GM12878 (cell line): ENCODE measurements at regions of chr15 and their contacts with region 1.

Region 1: GRCh38 chr15:88467073-88467934 is at the starts of genes MRPL46 and MRPS11:
- DNase-seq: peak; percentile 80
- ATAC-seq: peak; percentile 87
- H3K4me3 ChIP-seq: peak within 1 kb of the TSS; percentile 95
- H3K27ac ChIP-seq: peak within 1 kb of the TSS; percentile 97
- H3K4me1 ChIP-seq: peaks cover 6% of the 10 kb centered on the region
- H3K27me3 ChIP-seq: no peaks in the 10 kb centered on the region
- CTCF ChIP-seq: no peak
- EP300 ChIP-seq: no peak
- POLR2A ChIP-seq: peak; percentile 90
- RAD21 ChIP-seq: no peak
- polyA plus RNA-seq, gene MRPL46: 55.3 to 66.9 TPM
- polyA plus RNA-seq, gene MRPS11: 37.1 to 44.3 TPM

Region 2: GRCh38 chr15:88428805-88429605 is 38.3 kb before region 1 on chr15:
- CTCF ChIA-PET with region 1: no interaction called
- POLR2A ChIA-PET with region 1: no interaction called
- RAD21 ChIA-PET with region 1: no interaction called
- SMC1A ChIA-PET with region 1: no interaction called
- in situ Hi-C with region 1: no loop called
- intact Hi-C with region 1: no loop called
- DNase-seq: no peak
- ATAC-seq: no peak
- H3K4me3 ChIP-seq: no peak overlapping the region
- H3K27ac ChIP-seq: no peak overlapping the region
- H3K4me1 ChIP-seq: no peaks in the 10 kb centered on the region
- H3K27me3 ChIP-seq: peaks cover 2 to 8% of the 10 kb centered on the region in 2 experiments; a peak in 2 of 4 replicates
- CTCF ChIP-seq: no peak
- EP300 ChIP-seq: no peak
- POLR2A ChIP-seq: no peak
- RAD21 ChIP-seq: no peak

Region 3: DNA sequence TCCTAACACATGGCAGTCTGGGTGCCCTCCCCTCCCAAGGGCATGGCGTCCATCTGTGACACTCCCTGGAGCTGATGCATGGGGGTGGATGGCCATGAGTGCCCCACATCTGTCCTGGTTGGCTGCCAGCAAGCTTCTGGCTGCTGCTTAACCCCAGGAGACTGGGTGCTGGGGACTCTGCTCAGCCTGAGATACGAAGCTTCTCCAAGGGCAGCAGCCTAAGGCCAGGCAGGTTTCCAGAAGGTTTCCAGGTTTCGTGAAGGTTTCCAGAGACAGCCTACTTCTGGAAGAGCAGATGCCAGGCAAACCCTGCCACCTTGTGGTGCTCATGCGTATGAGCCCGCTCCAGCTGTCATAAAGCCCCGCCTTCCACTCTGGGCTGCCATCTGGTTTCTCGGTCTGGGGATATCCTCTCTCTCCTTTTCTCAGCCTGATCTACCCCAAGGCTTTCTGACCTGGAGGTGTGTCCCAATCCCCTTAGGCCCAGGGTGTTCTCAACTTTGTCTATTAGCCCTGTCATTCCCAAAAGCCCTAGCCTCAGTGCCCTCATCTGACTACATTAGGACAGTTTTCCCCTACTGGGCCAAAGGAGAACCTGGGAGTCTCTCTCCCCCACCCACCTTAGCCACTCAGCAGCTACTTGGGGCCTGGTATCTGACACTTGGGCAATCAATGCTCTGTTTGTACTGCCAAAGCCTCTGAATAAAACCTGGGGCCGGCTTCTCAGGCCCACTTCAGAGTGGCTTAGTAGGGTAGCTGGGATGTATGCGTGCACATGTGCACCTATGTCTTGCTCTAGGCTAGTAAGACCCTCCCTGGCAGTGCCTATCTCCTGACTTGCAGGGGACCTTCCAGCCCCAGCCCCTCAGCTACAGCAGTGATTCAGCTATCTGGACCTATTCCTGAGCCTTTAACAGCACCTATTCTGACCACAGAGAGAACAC is 12.2 kb before region 1 on chr15:
- CTCF ChIA-PET with region 1: interaction called, 24 read pairs
- POLR2A ChIA-PET with region 1: interaction called, 3 read pairs
- RAD21 ChIA-PET with region 1: no interaction called
- SMC1A ChIA-PET with region 1: interaction called, 4 read pairs
- in situ Hi-C with region 1: no loop called
- intact Hi-C with region 1: no loop called
- DNase-seq: no peak
- ATAC-seq: peak; percentile 97
- H3K4me3 ChIP-seq: no peak overlapping the region
- H3K27ac ChIP-seq: no peak overlapping the region
- H3K4me1 ChIP-seq: no peaks in the 10 kb centered on the region
- H3K27me3 ChIP-seq: no peaks in the 10 kb centered on the region
- CTCF ChIP-seq: peak; percentile 61 to 76 (median 74)
- EP300 ChIP-seq: no peak
- POLR2A ChIP-seq: peak; percentile 49
- RAD21 ChIP-seq: 0 out of 2 replicates have a peak, but pooled peaks have one; percentile 8

Region 4: GRCh38 chr15:88497109-88497765 is 29.9 kb after region 1 on chr15:
- CTCF ChIA-PET with region 1: no interaction called
- POLR2A ChIA-PET with region 1: no interaction called
- RAD21 ChIA-PET with region 1: no interaction called
- SMC1A ChIA-PET with region 1: no interaction called
- in situ Hi-C with region 1: no loop called
- intact Hi-C with region 1: no loop called
- DNase-seq: no peak
- ATAC-seq: no peak
- H3K4me3 ChIP-seq: no peak overlapping the region
- H3K27ac ChIP-seq: no peak overlapping the region
- H3K4me1 ChIP-seq: no peaks in the 10 kb centered on the region
- H3K27me3 ChIP-seq: no peaks in the 10 kb centered on the region
- CTCF ChIP-seq: no peak
- EP300 ChIP-seq: no peak
- POLR2A ChIP-seq: no peak
- RAD21 ChIP-seq: no peak

Region 5: GRCh38 chr15:88546248-88547129 is 79.2 kb after region 1 on chr15 and contains the start of gene DET1:
- CTCF ChIA-PET with region 1: no interaction called
- POLR2A ChIA-PET with region 1: no interaction called
- RAD21 ChIA-PET with region 1: no interaction called
- SMC1A ChIA-PET with region 1: no interaction called
- in situ Hi-C with region 1: no loop called
- intact Hi-C with region 1: loop called (anchors 1 kb)
- DNase-seq: peak; percentile 93
- ATAC-seq: peak; percentile 98
- H3K4me3 ChIP-seq: peak within 1 kb of the TSS; percentile 84
- H3K27ac ChIP-seq: peak within 1 kb of the TSS; percentile 83
- H3K4me1 ChIP-seq: no peaks in the 10 kb centered on the region; the same call in 1 of the 2 replicates
- H3K27me3 ChIP-seq: no peaks in the 10 kb centered on the region
- CTCF ChIP-seq: peak; percentile 86 to 94 (median 90); a peak in 5 of 6 replicates
- EP300 ChIP-seq: no peak; a peak in 1 of 4 replicates
- POLR2A ChIP-seq: peak; percentile 54
- RAD21 ChIP-seq: peak; percentile 23; the same call in 1 of the 2 replicates
- polyA plus RNA-seq, gene DET1: 0.16 to 0.50 TPM

Region 6: DNA sequence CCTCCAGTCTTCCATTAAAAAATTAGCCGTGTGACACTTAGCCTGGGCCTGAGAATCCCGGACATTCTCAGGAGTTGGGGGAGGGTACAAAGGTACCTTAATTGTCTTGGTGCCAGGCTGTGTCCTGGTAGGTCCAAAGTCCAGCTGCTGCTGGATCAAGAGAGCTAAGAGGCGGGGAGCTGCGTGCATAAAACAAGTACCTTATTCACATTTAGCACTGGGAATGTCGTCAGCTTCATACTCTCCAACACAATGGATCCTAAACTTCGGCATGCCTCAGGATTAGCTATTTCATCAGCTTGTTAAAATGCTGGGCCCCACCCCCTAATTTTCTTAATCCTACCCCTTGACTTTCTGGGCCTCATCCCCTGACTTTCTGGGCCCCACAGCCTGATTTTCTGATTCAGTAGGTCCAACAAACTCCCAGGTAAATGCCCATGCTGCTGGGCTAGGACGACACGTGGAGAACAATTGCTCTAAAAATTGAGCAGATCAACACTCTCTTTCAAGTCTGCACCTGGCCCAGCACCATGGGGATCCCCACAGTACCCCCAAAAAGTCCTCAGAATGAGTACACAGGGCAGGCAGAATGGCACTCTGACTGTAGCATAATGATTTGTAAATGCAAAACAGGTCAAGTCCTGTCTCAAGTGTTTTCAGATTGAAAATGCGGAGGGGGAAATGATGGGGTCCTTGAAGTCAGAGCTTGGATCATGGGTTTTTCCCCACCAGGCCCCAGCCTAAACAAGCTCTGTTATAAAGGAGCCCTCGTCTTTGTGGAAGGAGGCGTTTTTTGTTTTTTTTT is 148.2 kb after region 1 on chr15:
- CTCF ChIA-PET with region 1: interaction called, 14 read pairs
- POLR2A ChIA-PET with region 1: no interaction called
- RAD21 ChIA-PET with region 1: interaction called, 5 read pairs
- SMC1A ChIA-PET with region 1: no interaction called
- in situ Hi-C with region 1: no loop called
- intact Hi-C with region 1: no loop called
- DNase-seq: no peak
- ATAC-seq: peak; percentile 84
- H3K4me3 ChIP-seq: no peak overlapping the region
- H3K27ac ChIP-seq: peak overlapping the region; percentile 78
- H3K4me1 ChIP-seq: peaks cover 32% of the 10 kb centered on the region
- H3K27me3 ChIP-seq: no peaks in the 10 kb centered on the region
- CTCF ChIP-seq: no peak
- EP300 ChIP-seq: 0 out of 4 replicates have a peak, but pooled peaks of 1 of the 2 experiments have one; percentile 13
- POLR2A ChIP-seq: no peak
- RAD21 ChIP-seq: no peak